Ascending aorta (tissue), 2 donors: ENCODE measurements at regions of chr2 and their contacts with region 1.

Region 1: GRCh38 chr2:197434541-197435513 is at the start of gene SF3B1:
- DNase-seq: peak; percentile 94 to 99
- H3K4me3 ChIP-seq: peak within 1 kb of the TSS; percentile 87 to 100
- H3K27ac ChIP-seq: peak within 1 kb of the TSS; percentile 96 to 99
- H3K4me1 ChIP-seq: peaks cover 0 to 29% of the 10 kb centered on the region in 2 donors
- H3K27me3 ChIP-seq: no peaks in the 10 kb centered on the region
- CTCF ChIP-seq: no peak
- total RNA-seq, gene SF3B1: 88.6 TPM

Region 2: GRCh38 chr2:196926562-196927375 is 508.1 kb before region 1 on chr2 and contains the start of gene PGAP1:
- intact Hi-C with region 1: loop called (anchors 5 kb)
- DNase-seq: peak; percentile 55 to 94
- H3K4me3 ChIP-seq: peak within 1 kb of the TSS; percentile 85
- H3K27ac ChIP-seq: peak within 1 kb of the TSS; percentile 84 to 89
- H3K4me1 ChIP-seq: peaks cover 0 to 4% of the 10 kb centered on the region in 2 donors
- H3K27me3 ChIP-seq: no peaks in the 10 kb centered on the region
- CTCF ChIP-seq: no peak
- total RNA-seq, gene PGAP1: 2.3 TPM

Region 3: GRCh38 chr2:197453161-197453914 is 18.5 kb after region 1 on chr2 and contains the start of gene COQ10B:
- intact Hi-C with region 1: loop called (anchors 1 kb)
- DNase-seq: peak; percentile 98 to 100
- H3K4me3 ChIP-seq: peak within 1 kb of the TSS; percentile 60 to 83
- H3K27ac ChIP-seq: peak within 1 kb of the TSS; percentile 96 to 99
- H3K4me1 ChIP-seq: peaks cover 9 to 19% of the 10 kb centered on the region in 2 donors
- H3K27me3 ChIP-seq: no peaks in the 10 kb centered on the region
- CTCF ChIP-seq: peak in 2 of 3 experiments; percentile 15 to 25
- total RNA-seq, gene COQ10B: 6.0 TPM

Region 4: DNA sequence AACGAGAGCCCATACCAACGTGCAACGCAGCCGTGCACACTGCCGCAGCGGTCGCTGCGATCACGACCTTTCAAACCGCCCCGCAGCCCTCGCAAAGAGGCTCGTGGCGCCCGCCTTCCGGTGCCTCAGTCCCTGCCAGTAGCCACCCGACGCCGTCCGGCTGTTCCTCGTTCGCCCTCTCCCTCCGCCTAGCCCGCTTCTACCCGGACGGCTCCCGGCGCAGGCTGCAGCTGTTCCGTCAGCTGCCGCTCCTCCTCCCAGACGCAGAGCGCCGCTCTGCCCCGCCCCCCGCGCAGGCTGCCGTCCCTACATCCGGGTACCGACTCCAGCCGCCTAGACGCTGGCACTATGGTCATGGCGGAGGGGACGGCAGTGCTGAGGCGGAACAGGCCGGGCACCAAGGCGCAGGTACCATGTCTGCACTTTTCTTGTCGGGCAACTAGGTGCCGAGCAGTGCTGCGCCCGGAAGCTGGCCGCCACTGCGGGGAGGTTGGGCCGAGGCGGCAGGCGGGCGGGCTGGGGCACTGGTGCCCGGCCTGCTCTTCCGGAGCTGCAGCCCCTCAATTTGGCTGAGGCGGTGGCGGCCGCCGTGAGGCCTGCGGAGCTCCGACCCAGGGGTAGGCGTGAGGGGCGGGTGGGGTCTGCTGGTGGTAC is 81.0 kb after region 1 on chr2 and contains the start of gene MOB4:
- intact Hi-C with region 1: loop called (anchors 2 kb)
- DNase-seq: peak; percentile 72 to 97
- H3K4me3 ChIP-seq: peak within 1 kb of the TSS; percentile 77 to 84
- H3K27ac ChIP-seq: peak within 1 kb of the TSS; percentile 84 to 95
- H3K4me1 ChIP-seq: peaks cover 0 to 7% of the 10 kb centered on the region in 2 donors
- H3K27me3 ChIP-seq: no peaks in the 10 kb centered on the region
- CTCF ChIP-seq: peak in 1 of 3 experiments; percentile 4
- total RNA-seq, gene MOB4: 29.2 TPM